Activated CD4-positive, alpha-beta memory T cell treated with anti-CD3 and anti-CD28 coated beads, Interleukin-2, amount 10 ng/mL, durations not matched to agents 7 days and 5 days (primary cell): ENCODE measurements at regions of chr10 and their contacts with region 1.

Region 1: GRCh38 chr10:21732067-21732772 is 198.2 kb downstream of the MLLT10 start:
- DNase-seq: peak; percentile 48
- H3K4me3 Mint-ChIP-seq: no peak overlapping the region
- H3K27ac Mint-ChIP-seq: no peak overlapping the region
- H3K4me1 Mint-ChIP-seq: peaks cover 27% of the 10 kb centered on the region
- H3K27me3 Mint-ChIP-seq: no peaks in the 10 kb centered on the region

Region 2: GRCh38 chr10:21720090-21720489 is 12.1 kb before region 1 on chr10:
- CTCF ChIA-PET with region 1: interaction called, 10 read pairs
- POLR2A ChIA-PET with region 1: no interaction called
- DNase-seq: no peak
- H3K4me3 Mint-ChIP-seq: no peak overlapping the region
- H3K27ac Mint-ChIP-seq: no peak overlapping the region
- H3K4me1 Mint-ChIP-seq: peaks cover 10% of the 10 kb centered on the region
- H3K27me3 Mint-ChIP-seq: no peaks in the 10 kb centered on the region

Region 3: GRCh38 chr10:21744203-21744602 is 12.0 kb after region 1 on chr10:
- CTCF ChIA-PET with region 1: interaction called, 12 read pairs
- POLR2A ChIA-PET with region 1: no interaction called
- DNase-seq: no peak
- H3K4me3 Mint-ChIP-seq: no peak overlapping the region
- H3K27ac Mint-ChIP-seq: no peak overlapping the region
- H3K4me1 Mint-ChIP-seq: peaks cover 36% of the 10 kb centered on the region
- H3K27me3 Mint-ChIP-seq: no peaks in the 10 kb centered on the region

Region 4: DNA sequence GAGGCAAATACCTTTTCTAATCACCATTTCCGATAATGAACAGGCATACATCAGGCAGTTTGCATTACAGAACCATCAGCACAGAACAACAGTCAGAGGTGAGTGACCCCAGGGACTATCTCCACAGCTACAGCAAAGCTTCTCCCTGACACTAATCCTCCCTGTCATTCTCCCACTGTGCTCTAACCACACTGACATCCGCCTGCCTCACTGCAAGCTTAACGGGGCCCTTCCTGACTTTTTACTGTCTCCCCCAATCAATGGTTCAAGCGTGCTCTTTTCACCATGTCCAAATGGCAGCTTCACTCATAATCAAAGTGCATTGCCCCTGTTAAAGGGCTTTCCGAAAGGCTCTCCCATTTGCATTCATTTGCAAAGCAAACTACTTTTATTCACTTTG is 75.0 kb after region 1 on chr10:
- CTCF ChIA-PET with region 1: no interaction called
- POLR2A ChIA-PET with region 1: no interaction called
- DNase-seq: no peak
- H3K4me3 Mint-ChIP-seq: no peak overlapping the region
- H3K27ac Mint-ChIP-seq: no peak overlapping the region
- H3K4me1 Mint-ChIP-seq: no peaks in the 10 kb centered on the region
- H3K27me3 Mint-ChIP-seq: no peaks in the 10 kb centered on the region